Prostate gland (tissue), 2 donors: ENCODE measurements at regions of chr10 and their contacts with region 1.

Region 1: DNA sequence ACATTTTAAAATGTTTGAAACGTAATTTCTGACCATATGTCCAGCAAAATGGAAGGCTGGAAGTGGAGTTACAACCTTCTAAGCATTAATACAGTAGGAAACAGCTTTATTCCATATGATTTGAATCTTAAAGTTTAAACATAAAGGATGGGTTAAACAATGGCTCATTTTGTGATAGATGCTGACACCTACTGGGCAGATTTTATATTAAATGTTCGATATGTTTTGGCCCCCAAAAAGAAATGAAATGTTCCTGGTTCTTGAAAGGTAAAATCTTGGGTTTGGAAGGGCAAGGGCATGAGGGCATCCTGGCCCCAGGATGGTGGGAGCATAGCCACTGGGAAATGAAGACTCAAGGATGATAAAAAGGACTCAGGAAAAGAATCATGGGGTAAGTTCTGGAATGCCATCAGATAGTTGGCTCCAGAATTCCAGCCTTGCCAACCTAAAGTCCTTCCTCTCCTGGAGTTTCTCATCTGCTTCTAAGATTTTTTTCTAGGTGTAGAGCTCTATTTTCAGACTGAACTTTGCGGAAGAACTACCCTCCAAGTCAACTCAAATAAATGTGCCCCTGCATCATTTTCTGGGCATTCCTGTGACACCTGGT is 34.6 kb upstream of the SLC35G1 start:
- DNase-seq: no peak
- H3K4me3 ChIP-seq: no peak overlapping the region
- H3K27ac ChIP-seq: no peak overlapping the region
- H3K4me1 ChIP-seq: no peaks in the 10 kb centered on the region
- H3K27me3 ChIP-seq: no peaks in the 10 kb centered on the region
- CTCF ChIP-seq: peak in 2 of 4 experiments; percentile 26 to 28
- POLR2A ChIP-seq: no peak

Region 2: GRCh38 chr10:93701868-93702210 is 157.3 kb before region 1 on chr10:
- intact Hi-C with region 1: loop called (anchors 2 kb)
- DNase-seq: peak; percentile 8
- H3K4me3 ChIP-seq: peak overlapping the region; percentile 61 to 70
- H3K27ac ChIP-seq: peak overlapping the region; percentile 79 to 85
- H3K4me1 ChIP-seq: no peaks in the 10 kb centered on the region
- H3K27me3 ChIP-seq: no peaks in the 10 kb centered on the region
- CTCF ChIP-seq: no peak
- POLR2A ChIP-seq: no peak

Region 3: DNA sequence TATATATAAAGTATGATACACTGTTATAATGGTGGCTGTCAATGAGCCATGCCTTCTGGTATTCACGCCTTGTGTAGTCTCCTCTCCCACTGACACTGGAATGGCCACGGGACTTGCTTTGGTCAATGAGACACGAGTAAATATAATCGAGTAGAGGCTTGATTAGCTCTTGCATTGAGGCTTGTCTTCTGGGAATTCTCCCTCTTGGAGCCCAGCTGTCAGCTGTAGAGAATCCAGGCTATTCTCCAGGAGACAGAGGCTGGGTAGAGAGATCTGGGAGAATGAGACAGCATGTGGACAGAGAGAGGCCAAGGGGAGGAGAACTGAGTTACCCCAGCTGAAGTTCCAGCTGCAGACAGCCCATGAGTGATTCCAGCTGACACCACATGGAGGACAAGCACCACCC is 109.4 kb after region 1 on chr10:
- intact Hi-C with region 1: no loop called
- DNase-seq: no peak
- H3K4me3 ChIP-seq: no peak overlapping the region
- H3K27ac ChIP-seq: no peak overlapping the region
- H3K4me1 ChIP-seq: no peaks in the 10 kb centered on the region
- H3K27me3 ChIP-seq: no peaks in the 10 kb centered on the region
- CTCF ChIP-seq: no peak
- POLR2A ChIP-seq: no peak